ENCODE measurements at regions of chr20 and their contacts with region 1.

Region 1: GRCh38 chr20:43448748-43449535 is 8.8 kb upstream of the SRSF6 start:
- DNase-seq: peak; percentile 42
- ATAC-seq: peak; percentile 79
- H3K4me3 Mint-ChIP-seq: no peak overlapping the region
- H3K27ac Mint-ChIP-seq: no peak overlapping the region
- H3K4me1 Mint-ChIP-seq: no peaks in the 10 kb centered on the region
- H3K27me3 Mint-ChIP-seq: no peaks in the 10 kb centered on the region; the same call in 1 of the 2 replicates
- CTCF ChIP-seq: peak; percentile 43; the same call in 1 of the 2 replicates

Region 2: GRCh38 chr20:43430265-43431133 is 18.4 kb before region 1 on chr20:
- CTCF ChIA-PET with region 1: interaction called, 14 read pairs
- POLR2A ChIA-PET with region 1: interaction called, 4 read pairs
- DNase-seq: peak; percentile 69
- ATAC-seq: peak; percentile 84
- H3K4me3 Mint-ChIP-seq: peak overlapping the region; percentile 50
- H3K27ac Mint-ChIP-seq: no peak overlapping the region
- H3K4me1 Mint-ChIP-seq: peaks cover 21% of the 10 kb centered on the region
- H3K27me3 Mint-ChIP-seq: peaks cover 6% of the 10 kb centered on the region; the same call in 1 of the 2 replicates
- CTCF ChIP-seq: no peak

Region 3: GRCh38 chr20:43472671-43473380 is 23.9 kb after region 1 on chr20:
- CTCF ChIA-PET with region 1: interaction called, 15 read pairs
- POLR2A ChIA-PET with region 1: no interaction called
- DNase-seq: no peak
- ATAC-seq: peak; percentile 47
- H3K4me3 Mint-ChIP-seq: no peak overlapping the region
- H3K27ac Mint-ChIP-seq: no peak overlapping the region
- H3K4me1 Mint-ChIP-seq: no peaks in the 10 kb centered on the region
- H3K27me3 Mint-ChIP-seq: peaks cover 3% of the 10 kb centered on the region
- CTCF ChIP-seq: no peak

Region 4: DNA sequence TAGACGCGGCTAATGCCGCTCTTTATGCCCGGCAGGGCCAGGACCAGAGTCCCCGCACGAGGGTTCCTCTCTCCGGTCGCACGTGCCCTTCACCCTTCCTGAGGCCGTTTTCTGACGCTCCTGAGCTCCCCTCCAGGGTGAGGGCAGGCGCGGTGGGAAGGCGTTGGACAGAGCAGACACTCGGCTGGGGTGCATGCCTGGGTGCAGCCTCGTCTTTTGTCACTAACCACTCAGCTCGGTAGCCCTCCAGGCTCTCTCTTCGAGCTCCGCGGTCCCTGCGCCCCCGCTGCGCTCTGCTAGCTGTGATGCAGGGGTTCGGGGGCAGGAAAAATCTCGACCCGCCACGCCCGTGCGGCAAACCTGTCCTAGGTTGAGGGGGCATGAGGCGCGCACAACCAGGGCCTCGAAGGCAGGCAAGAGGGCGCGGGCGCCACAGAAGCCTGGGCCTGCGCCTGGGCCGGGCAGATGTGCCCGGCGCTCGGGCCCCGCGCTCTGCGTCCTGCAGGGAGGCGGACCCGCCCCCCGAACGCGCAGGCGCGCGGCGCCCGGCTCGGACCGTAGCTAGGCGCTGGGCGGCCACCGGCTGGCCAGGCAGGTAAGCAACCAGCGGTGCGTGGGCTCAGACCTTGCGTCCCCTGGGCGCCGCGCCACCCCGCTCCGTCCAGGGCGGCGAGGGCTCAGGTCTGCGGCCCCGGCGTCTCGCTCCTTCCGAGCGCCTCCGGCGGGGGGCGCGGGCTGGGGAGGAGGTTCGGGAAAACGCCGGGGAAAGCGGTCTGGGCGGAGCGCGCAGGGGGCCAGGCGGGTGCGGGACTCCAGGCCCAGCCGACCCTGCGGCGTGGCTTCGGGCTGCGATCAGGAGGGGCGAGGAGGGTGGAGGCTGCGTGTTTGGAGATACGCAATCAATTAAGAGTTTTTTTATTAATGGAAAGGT is 58.5 kb after region 1 on chr20 and contains the start of gene L3MBTL1:
- CTCF ChIA-PET with region 1: interaction called, 19 read pairs
- POLR2A ChIA-PET with region 1: no interaction called
- DNase-seq: peak; percentile 72
- ATAC-seq: peak; percentile 67
- H3K4me3 Mint-ChIP-seq: peak within 1 kb of the TSS; percentile 68
- H3K27ac Mint-ChIP-seq: peak within 1 kb of the TSS; percentile 86
- H3K4me1 Mint-ChIP-seq: peaks cover 8% of the 10 kb centered on the region; the same call in 1 of the 2 replicates
- H3K27me3 Mint-ChIP-seq: peaks cover 44% of the 10 kb centered on the region
- CTCF ChIP-seq: no peak
- total RNA-seq, gene L3MBTL1: 28.3 to 28.7 TPM (median 28.3 TPM) in 3 replicates

Region 5: GRCh38 chr20:43590392-43591323 is 141.7 kb after region 1 on chr20 and contains the start of gene IFT52:
- CTCF ChIA-PET with region 1: interaction called, 11 read pairs
- POLR2A ChIA-PET with region 1: no interaction called
- DNase-seq: peak; percentile 92
- ATAC-seq: peak; percentile 97
- H3K4me3 Mint-ChIP-seq: peak within 1 kb of the TSS; percentile 92
- H3K27ac Mint-ChIP-seq: peak within 1 kb of the TSS; percentile 97
- H3K4me1 Mint-ChIP-seq: peaks cover 8% of the 10 kb centered on the region
- H3K27me3 Mint-ChIP-seq: no peaks in the 10 kb centered on the region
- CTCF ChIP-seq: no peak
- total RNA-seq, gene IFT52: 26.0 to 29.1 TPM (median 27.5 TPM) in 3 replicates

Region 6: GRCh38 chr20:43603136-43603535 is 154.2 kb after region 1 on chr20:
- CTCF ChIA-PET with region 1: no interaction called
- POLR2A ChIA-PET with region 1: no interaction called
- DNase-seq: no peak
- ATAC-seq: no peak
- H3K4me3 Mint-ChIP-seq: no peak overlapping the region
- H3K27ac Mint-ChIP-seq: no peak overlapping the region
- H3K4me1 Mint-ChIP-seq: no peaks in the 10 kb centered on the region
- H3K27me3 Mint-ChIP-seq: no peaks in the 10 kb centered on the region
- CTCF ChIP-seq: no peak

Region 7: GRCh38 chr20:43666376-43667328 is 217.7 kb after region 1 on chr20 and contains the start of gene MYBL2:
- CTCF ChIA-PET with region 1: interaction called, 13 read pairs
- POLR2A ChIA-PET with region 1: no interaction called
- DNase-seq: peak; percentile 78
- ATAC-seq: peak; percentile 88
- H3K4me3 Mint-ChIP-seq: peak within 1 kb of the TSS; percentile 83
- H3K27ac Mint-ChIP-seq: no peak within 1 kb of the TSS
- H3K4me1 Mint-ChIP-seq: peaks cover 4% of the 10 kb centered on the region
- H3K27me3 Mint-ChIP-seq: peaks cover 22% of the 10 kb centered on the region
- CTCF ChIP-seq: no peak
- total RNA-seq, gene MYBL2: 133 to 166 TPM (median 133 TPM) in 3 replicates

Region 8: DNA sequence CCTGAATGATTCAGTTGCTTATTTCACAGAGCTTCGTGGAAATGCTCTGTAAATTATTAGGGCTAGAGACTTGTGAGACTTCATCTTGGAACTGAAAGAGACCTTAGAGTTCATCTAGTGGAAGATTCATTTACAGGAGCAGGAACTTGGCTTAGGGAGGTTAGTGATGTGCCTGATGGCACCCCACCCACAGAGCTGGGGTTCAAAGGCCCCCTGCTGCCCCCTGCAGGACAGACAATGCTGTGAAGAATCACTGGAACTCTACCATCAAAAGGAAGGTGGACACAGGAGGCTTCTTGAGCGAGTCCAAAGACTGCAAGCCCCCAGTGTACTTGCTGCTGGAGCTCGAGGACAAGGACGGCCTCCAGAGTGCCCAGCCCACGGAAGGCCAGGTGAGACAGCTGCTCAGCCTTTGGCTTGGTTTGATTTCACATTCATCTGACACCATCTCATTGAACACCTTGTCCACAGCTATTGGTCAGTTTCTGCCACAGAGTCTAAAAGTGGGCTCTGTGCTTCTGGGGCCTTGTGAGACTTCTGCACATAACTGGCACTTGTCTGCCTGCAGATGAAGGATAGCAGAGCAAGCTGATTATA is 243.1 kb after region 1 on chr20:
- CTCF ChIA-PET with region 1: interaction called, 10 read pairs
- POLR2A ChIA-PET with region 1: no interaction called
- DNase-seq: peak; percentile 70
- ATAC-seq: peak; percentile 65
- H3K4me3 Mint-ChIP-seq: no peak overlapping the region
- H3K27ac Mint-ChIP-seq: no peak overlapping the region
- H3K4me1 Mint-ChIP-seq: no peaks in the 10 kb centered on the region
- H3K27me3 Mint-ChIP-seq: no peaks in the 10 kb centered on the region
- CTCF ChIP-seq: peak; percentile 42; the same call in 1 of the 2 replicates